ENCODE measurements at regions of chr17 and their contacts with region 1.

Region 1: DNA sequence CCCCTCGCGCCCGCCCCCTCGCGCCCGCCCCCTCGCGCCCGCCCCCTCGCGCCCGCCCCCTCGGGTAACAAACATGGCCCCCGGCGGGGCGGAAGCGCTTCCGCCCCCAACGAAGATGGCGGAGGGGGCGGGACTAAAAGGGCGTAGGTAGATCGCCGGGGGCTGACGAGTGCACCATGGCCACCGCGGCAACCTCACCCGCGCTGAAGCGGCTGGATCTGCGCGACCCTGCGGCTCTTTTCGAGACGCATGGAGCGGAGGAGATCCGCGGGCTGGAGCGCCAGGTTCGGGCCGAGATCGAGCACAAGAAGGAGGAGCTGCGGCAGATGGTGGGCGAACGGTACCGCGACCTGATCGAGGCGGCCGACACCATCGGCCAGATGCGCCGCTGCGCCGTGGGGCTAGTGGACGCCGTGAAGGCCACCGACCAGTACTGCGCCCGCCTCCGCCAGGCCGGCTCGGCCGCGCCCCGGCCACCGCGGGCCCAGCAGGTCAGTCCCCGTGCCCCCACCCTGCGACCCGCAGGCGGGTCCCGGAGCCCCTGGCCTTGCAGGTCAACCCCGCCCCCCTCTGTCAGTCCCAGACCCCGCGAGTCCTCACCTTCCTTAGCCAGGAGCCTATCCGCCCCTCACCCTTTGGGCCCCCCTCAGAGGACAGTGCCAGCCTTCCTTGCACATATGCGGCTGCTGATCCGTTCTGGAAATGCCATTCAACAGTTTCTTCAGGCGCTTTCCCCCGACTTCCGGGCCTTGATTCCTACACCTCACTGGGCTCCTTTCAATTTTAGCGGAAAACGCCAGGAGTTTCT is at the start of gene COG1:
- DNase-seq: peak; percentile 94
- ATAC-seq: peak; percentile 67
- H3K4me3 ChIP-seq: peak within 1 kb of the TSS; percentile 82
- H3K27ac ChIP-seq: peak within 1 kb of the TSS; percentile 83
- H3K4me1 ChIP-seq: peaks cover 17% of the 10 kb centered on the region
- H3K27me3 ChIP-seq: no peaks in the 10 kb centered on the region
- CTCF ChIP-seq: no peak
- total RNA-seq, gene COG1: 24.1 and 31.6 TPM in 2 replicates

Region 2: GRCh38 chr17:72901083-72901482 is 292.0 kb before region 1 on chr17:
- CTCF ChIA-PET with region 1: no interaction called
- POLR2A ChIA-PET with region 1: no interaction called
- intact Hi-C with region 1: no loop called
- DNase-seq: no peak
- ATAC-seq: peak; percentile 68
- H3K4me3 ChIP-seq: no peak overlapping the region
- H3K27ac ChIP-seq: no peak overlapping the region
- H3K4me1 ChIP-seq: peaks cover 4% of the 10 kb centered on the region; the same call in 1 of the 2 replicates
- H3K27me3 ChIP-seq: no peaks in the 10 kb centered on the region
- CTCF ChIP-seq: no peak

Region 3: GRCh38 chr17:72985881-72986720 is 207.0 kb before region 1 on chr17:
- CTCF ChIA-PET with region 1: interaction called, 14 read pairs
- POLR2A ChIA-PET with region 1: no interaction called
- intact Hi-C with region 1: loop called (anchors 1 kb)
- DNase-seq: peak; percentile 88
- ATAC-seq: peak; percentile 57
- H3K4me3 ChIP-seq: no peak overlapping the region
- H3K27ac ChIP-seq: no peak overlapping the region
- H3K4me1 ChIP-seq: peaks cover 25% of the 10 kb centered on the region
- H3K27me3 ChIP-seq: no peaks in the 10 kb centered on the region
- CTCF ChIP-seq: peak; percentile 98

Region 4: DNA sequence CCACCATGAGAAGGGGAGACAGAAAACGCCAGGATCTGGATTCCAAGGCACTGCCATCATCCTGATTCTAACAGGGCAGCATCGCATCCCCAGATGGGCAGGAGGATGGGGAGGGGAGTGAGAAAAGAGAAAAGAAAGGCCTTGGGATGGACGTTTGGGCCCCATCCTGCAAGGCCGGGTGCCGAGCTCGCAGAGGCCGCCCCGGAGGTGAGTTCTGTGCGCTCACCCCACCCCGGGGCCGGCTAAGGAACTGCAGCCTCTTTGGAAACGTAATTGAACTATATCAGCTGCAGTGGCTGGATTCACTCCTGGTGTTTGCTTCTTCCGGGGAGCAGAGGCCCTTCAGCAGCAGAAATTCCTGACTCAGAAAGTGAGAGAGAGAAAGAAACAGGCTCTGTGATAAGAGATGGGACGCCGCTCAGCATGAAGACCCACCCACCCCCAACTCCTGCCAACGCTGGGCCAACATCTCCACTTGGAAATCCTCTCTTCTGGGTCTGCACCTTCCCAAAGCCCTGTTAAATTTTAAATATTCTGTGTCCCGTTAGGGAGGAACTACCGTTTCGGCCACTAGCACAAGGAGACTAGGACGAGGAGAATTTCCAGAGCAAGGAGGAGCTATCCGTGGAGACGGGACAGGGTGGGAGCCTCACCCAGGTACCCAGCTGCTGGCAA is 36.8 kb before region 1 on chr17:
- CTCF ChIA-PET with region 1: interaction called, 18 read pairs
- POLR2A ChIA-PET with region 1: no interaction called
- intact Hi-C with region 1: no loop called
- DNase-seq: peak; percentile 77
- ATAC-seq: peak; percentile 95
- H3K4me3 ChIP-seq: no peak overlapping the region
- H3K27ac ChIP-seq: no peak overlapping the region
- H3K4me1 ChIP-seq: peaks cover 3% of the 10 kb centered on the region; the same call in 1 of the 2 replicates
- H3K27me3 ChIP-seq: 0 out of 2 replicates have a peak, but pooled peaks cover 3% of the 10 kb centered on the region
- CTCF ChIP-seq: peak; percentile 92

Region 5: DNA sequence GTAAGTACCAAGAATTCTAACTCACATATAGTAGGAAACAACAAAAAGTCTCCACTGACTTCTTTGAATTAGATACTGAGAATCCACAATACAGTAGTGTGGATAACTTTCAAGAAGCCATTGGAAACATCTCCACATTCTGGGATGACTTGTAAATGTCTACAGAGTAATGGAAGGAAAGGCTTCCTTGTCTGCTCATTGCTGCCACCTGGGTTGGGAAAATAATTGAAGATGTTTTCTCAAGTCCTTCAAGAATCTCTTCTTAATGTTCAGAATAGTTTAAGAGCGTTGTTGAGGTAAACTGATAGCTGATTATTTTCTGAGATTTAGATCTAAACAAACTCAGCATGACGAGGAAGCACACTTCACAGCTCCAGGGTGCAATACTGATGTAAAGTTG is 54.6 kb after region 1 on chr17:
- CTCF ChIA-PET with region 1: no interaction called
- POLR2A ChIA-PET with region 1: no interaction called
- intact Hi-C with region 1: loop called (anchors 1 kb)
- DNase-seq: no peak
- ATAC-seq: peak; percentile 31; the same call in 1 of the 2 replicates
- H3K4me3 ChIP-seq: no peak overlapping the region
- H3K27ac ChIP-seq: no peak overlapping the region
- H3K4me1 ChIP-seq: no peaks in the 10 kb centered on the region
- H3K27me3 ChIP-seq: no peaks in the 10 kb centered on the region
- CTCF ChIP-seq: peak; percentile 49; the same call in 1 of the 2 replicates

Region 6: GRCh38 chr17:73311781-73312641 is 118.9 kb after region 1 on chr17 and contains the start of gene CDC42EP4:
- CTCF ChIA-PET with region 1: no interaction called
- POLR2A ChIA-PET with region 1: no interaction called
- intact Hi-C with region 1: loop called (anchors 5 kb)
- DNase-seq: peak; percentile 98
- ATAC-seq: peak; percentile 81
- H3K4me3 ChIP-seq: peak within 1 kb of the TSS; percentile 94
- H3K27ac ChIP-seq: peak within 1 kb of the TSS; percentile 82
- H3K4me1 ChIP-seq: peaks cover 35% of the 10 kb centered on the region
- H3K27me3 ChIP-seq: no peaks in the 10 kb centered on the region
- CTCF ChIP-seq: no peak
- total RNA-seq, gene CDC42EP4: 83.1 and 109 TPM in 2 replicates